Activated T-helper 2 cell treated with anti-CD3 and anti-CD28 coated beads, Interferon-gamma antibody, Interleukin-2, Interleukin-4, amounts not matched to agents 10 μg/mL and 5 μg/mL and 100 μg/mL, durations not matched to agents 14 hours and 24 hours and 36 hours (primary cell): ENCODE measurements at regions of chr19 and their contacts with region 1.

Region 1: GRCh38 chr19:13012690-13013608 is 17.7 kb downstream of the NFIX start:
- DNase-seq: no peak
- H3K4me3 Mint-ChIP-seq: peak overlapping the region; percentile 68
- H3K27ac Mint-ChIP-seq: peak overlapping the region; percentile 51
- H3K4me1 Mint-ChIP-seq: peaks cover 13% of the 10 kb centered on the region
- H3K27me3 Mint-ChIP-seq: peaks cover 74% of the 10 kb centered on the region

Region 2: DNA sequence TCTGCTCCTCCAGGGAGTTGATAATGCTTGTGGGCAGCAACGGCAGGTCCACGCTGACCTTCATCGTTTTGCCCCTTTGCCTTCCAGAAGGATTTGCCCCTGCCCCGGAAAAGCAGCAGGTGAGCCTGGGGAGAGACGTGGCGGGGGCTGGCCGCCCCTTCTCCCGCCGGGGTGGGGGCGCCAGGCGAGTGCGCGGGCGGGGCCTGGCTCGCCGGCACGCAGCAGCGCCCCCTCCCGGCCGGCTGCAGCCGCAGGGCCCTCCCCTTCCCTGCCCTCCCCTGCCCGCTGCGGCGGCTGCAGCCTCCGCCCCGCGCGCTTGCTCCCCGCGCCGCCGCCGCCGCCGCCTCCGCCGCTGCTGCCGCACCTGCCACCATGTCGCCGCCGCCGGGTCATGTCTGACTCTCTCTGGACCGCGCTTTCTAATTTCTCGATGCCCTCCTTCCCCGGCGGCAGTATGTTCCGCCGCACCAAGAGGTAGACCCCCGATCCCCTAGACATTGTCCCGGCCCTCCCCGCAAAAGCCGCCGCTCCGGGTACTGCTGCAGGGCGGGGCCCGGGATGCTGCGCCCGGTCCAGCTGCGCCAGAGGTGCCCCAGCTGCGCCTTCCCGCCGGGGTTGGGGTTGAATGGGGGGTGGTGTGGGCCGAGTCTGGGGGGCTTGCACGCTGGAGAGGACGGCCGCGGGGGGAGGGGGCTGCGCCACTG is 174.6 kb before region 1 on chr19 and contains the start of gene MAST1:
- intact Hi-C with region 1: loop called (anchors 5 kb)
- DNase-seq: peak; percentile 51
- H3K4me3 Mint-ChIP-seq: peak within 1 kb of the TSS; percentile 72
- H3K27ac Mint-ChIP-seq: peak within 1 kb of the TSS; percentile 21
- H3K4me1 Mint-ChIP-seq: peaks cover 34% of the 10 kb centered on the region
- H3K27me3 Mint-ChIP-seq: peaks cover 60% of the 10 kb centered on the region
- total RNA-seq, gene MAST1: 5.2 and 6.5 TPM in 2 replicates

Region 3: GRCh38 chr19:13022859-13023636 is 10.1 kb after region 1 on chr19:
- intact Hi-C with region 1: loop called (anchors 1 kb)
- DNase-seq: no peak
- H3K4me3 Mint-ChIP-seq: peak overlapping the region; percentile 54
- H3K27ac Mint-ChIP-seq: no peak overlapping the region
- H3K4me1 Mint-ChIP-seq: peaks cover 13% of the 10 kb centered on the region
- H3K27me3 Mint-ChIP-seq: peaks cover 56% of the 10 kb centered on the region